CD8-positive, alpha-beta T cell (primary cell): ENCODE measurements at regions of chr1 and their contacts with region 1.

Region 1: DNA sequence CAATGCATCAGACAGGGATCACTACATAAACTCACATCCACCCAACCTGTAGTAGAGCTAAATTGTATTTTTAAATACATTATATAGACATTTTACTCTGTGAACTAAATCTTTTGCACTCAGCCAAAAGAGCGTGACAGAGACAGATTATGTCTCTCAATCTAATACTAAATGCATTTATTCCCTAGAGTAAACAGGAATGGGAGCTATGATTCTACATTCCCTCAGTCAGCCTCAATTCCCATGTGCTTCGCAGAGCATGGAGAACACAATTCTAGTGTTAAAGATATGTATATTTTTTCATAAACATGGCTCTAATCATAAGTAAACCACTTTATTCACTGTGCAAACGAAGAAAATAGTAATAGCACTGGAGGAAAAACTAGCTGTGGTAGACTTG is 16.5 kb downstream of the PIGK start:
- DNase-seq: no peak
- ATAC-seq: no peak
- H3K4me3 ChIP-seq: no peak overlapping the region
- H3K4me3 Mint-ChIP-seq: no peak overlapping the region
- H3K27ac ChIP-seq: no peak overlapping the region
- H3K27ac Mint-ChIP-seq: no peak overlapping the region
- H3K4me1 ChIP-seq: no peaks in the 10 kb centered on the region
- H3K4me1 Mint-ChIP-seq: peaks cover 9% of the 10 kb centered on the region
- H3K27me3 ChIP-seq: no peaks in the 10 kb centered on the region
- H3K27me3 Mint-ChIP-seq: no peaks in the 10 kb centered on the region
- CTCF ChIP-seq: no peak

Region 2: DNA sequence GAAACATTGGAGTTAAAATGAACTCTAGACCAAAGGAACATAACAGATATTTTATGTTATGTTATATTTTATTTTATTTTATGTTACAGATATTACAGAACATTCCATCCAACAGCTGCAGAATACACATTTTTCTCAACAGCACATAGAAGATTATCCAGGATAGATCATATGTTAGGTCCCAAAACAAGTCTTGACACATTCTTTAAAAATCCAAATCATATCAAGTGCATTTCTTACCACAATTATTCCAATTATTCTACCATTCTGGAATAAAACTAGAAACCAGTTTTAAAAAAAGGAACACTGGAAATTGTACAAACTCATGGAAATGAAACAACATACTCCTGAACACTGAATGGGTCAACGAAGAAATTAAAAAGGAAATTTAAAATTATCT is 47.4 kb after region 1 on chr1:
- CTCF ChIA-PET with region 1: no interaction called
- POLR2A ChIA-PET with region 1: no interaction called
- intact Hi-C with region 1: loop called in 1 of 2 experiments (anchors 1 kb)
- DNase-seq: no peak
- ATAC-seq: no peak
- H3K4me3 ChIP-seq: no peak overlapping the region
- H3K4me3 Mint-ChIP-seq: no peak overlapping the region
- H3K27ac ChIP-seq: no peak overlapping the region
- H3K27ac Mint-ChIP-seq: no peak overlapping the region
- H3K4me1 ChIP-seq: no peaks in the 10 kb centered on the region
- H3K4me1 Mint-ChIP-seq: no peaks in the 10 kb centered on the region
- H3K27me3 ChIP-seq: no peaks in the 10 kb centered on the region
- H3K27me3 Mint-ChIP-seq: peaks cover 3% of the 10 kb centered on the region
- CTCF ChIP-seq: no peak